Activated CD4-positive, alpha-beta T cell treated with anti-CD3 and anti-CD28 coated beads, Interleukin-2, amount 10 ng/mL, durations not matched to agents 24 days and 14 days (primary cell): ENCODE measurements at regions of chr2 and their contacts with region 1.

Region 1: DNA sequence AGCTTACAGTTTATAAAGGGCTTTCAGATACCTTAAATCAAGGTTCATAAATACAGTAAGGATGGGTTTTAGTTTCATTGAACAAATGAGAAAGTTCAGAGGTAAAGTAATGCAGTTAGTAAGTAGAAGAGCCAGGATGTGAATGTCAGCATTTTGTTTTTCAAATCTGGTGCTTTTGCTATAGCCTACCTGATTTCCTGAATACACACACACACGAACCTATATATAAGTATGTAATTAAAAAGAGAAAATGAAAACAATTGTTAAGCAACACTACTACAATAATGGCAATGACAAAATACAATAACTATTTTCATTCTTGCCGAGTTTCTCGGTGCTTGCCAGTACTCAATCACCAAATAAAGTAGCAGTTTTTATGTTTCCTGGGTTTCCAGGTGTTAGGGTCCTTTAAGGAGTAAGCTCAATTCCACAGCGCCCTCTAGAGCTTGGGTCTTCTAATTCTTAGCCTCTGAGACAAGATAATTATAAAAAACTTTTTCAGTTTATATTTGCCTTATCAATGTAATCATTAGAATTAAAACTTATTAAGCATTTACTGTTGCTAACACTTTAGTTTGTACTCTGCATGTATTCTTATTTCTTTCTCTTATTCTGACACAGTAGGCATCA is 512.9 kb upstream of the ACVR2A start:
- DNase-seq: peak; percentile 81
- H3K4me3 Mint-ChIP-seq: no peak overlapping the region
- H3K27ac Mint-ChIP-seq: no peak overlapping the region
- H3K4me1 Mint-ChIP-seq: peaks cover 16% of the 10 kb centered on the region
- H3K27me3 Mint-ChIP-seq: peaks cover 3% of the 10 kb centered on the region

Region 2: GRCh38 chr2:146734042-146734820 is 597.7 kb before region 1 on chr2:
- intact Hi-C with region 1: loop called (anchors 5 kb)
- DNase-seq: no peak
- H3K4me3 Mint-ChIP-seq: no peak overlapping the region
- H3K27ac Mint-ChIP-seq: no peak overlapping the region
- H3K4me1 Mint-ChIP-seq: no peaks in the 10 kb centered on the region
- H3K27me3 Mint-ChIP-seq: no peaks in the 10 kb centered on the region

Region 3: DNA sequence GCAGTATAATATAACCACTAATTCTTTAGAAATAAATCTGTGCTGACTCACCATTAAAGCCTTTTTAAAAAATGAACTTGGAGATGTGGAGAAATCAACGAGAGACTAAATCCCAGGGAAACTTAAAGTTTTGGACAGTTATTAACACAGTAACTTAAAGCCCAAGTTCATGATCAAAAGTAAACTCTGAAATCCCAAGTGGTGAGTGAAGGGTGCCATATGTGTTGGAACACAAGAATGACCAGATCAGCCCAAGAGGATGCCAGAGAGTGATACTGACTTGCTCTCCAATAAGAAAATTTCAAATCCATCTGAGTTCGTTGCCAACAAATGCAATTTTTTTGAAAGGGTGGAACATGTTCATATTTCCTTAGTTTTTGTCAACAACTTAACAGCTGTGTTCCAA is 325.2 kb before region 1 on chr2:
- intact Hi-C with region 1: no loop called
- DNase-seq: no peak
- H3K4me3 Mint-ChIP-seq: no peak overlapping the region
- H3K27ac Mint-ChIP-seq: no peak overlapping the region
- H3K4me1 Mint-ChIP-seq: no peaks in the 10 kb centered on the region
- H3K27me3 Mint-ChIP-seq: peaks cover 2% of the 10 kb centered on the region

Region 4: GRCh38 chr2:147082850-147083522 is 248.9 kb before region 1 on chr2:
- intact Hi-C with region 1: loop called (anchors 2 kb)
- DNase-seq: peak; percentile 91
- H3K4me3 Mint-ChIP-seq: no peak overlapping the region
- H3K27ac Mint-ChIP-seq: no peak overlapping the region
- H3K4me1 Mint-ChIP-seq: peaks cover 6% of the 10 kb centered on the region
- H3K27me3 Mint-ChIP-seq: peaks cover 3% of the 10 kb centered on the region